ENCODE measurements at regions of chr6 and their contacts with region 1.

Region 1: GRCh38 chr6:45714741-45715507 is 300.7 kb downstream of the CLIC5 start:
- DNase-seq: peak; percentile 50
- ATAC-seq: peak; percentile 97
- H3K4me3 Mint-ChIP-seq: no peak overlapping the region
- H3K27ac Mint-ChIP-seq: no peak overlapping the region
- H3K4me1 Mint-ChIP-seq: peaks cover 6% of the 10 kb centered on the region
- H3K27me3 Mint-ChIP-seq: no peaks in the 10 kb centered on the region
- CTCF ChIP-seq: 0 out of 2 replicates have a peak, but pooled peaks have one; percentile 29

Region 2: DNA sequence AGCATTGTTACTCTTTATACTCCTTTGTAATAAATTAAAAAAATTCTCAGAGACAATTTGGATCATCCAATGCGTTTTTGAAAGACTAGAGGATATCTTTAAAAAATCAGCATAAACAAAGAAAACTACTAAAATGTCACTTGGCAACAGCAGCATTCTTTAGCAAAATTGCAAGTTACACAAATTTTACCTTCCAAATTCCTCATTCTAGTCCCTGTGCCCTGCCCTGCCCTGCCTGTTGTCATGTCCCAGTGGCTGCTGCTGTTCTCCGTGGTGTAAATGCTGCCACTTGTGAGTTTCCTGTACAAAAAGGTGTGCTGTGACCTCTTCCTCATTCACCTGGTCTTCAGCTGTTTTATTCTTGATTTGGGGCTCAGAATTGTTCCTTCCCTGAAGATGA is 1244.2 kb before region 1 on chr6:
- CTCF ChIA-PET with region 1: interaction called, 22 read pairs
- POLR2A ChIA-PET with region 1: interaction called, 3 read pairs
- DNase-seq: no peak
- ATAC-seq: no peak
- H3K4me3 Mint-ChIP-seq: no peak overlapping the region
- H3K27ac Mint-ChIP-seq: no peak overlapping the region
- H3K4me1 Mint-ChIP-seq: peaks cover 36% of the 10 kb centered on the region
- H3K27me3 Mint-ChIP-seq: peaks cover 2% of the 10 kb centered on the region; the same call in 1 of the 2 replicates
- CTCF ChIP-seq: no peak

Region 3: GRCh38 chr6:44655412-44656342 is 1059.2 kb before region 1 on chr6:
- CTCF ChIA-PET with region 1: interaction called, 16 read pairs
- POLR2A ChIA-PET with region 1: no interaction called
- DNase-seq: peak; percentile 91
- ATAC-seq: peak; percentile 88
- H3K4me3 Mint-ChIP-seq: no peak overlapping the region
- H3K27ac Mint-ChIP-seq: peak overlapping the region; percentile 40
- H3K4me1 Mint-ChIP-seq: peaks cover 33% of the 10 kb centered on the region
- H3K27me3 Mint-ChIP-seq: no peaks in the 10 kb centered on the region; the same call in 1 of the 2 replicates
- CTCF ChIP-seq: peak; percentile 93

Region 4: GRCh38 chr6:45423111-45423823 is 291.7 kb before region 1 on chr6:
- CTCF ChIA-PET with region 1: interaction called, 13 read pairs
- POLR2A ChIA-PET with region 1: no interaction called
- DNase-seq: peak; percentile 53
- ATAC-seq: peak; percentile 51
- H3K4me3 Mint-ChIP-seq: peak overlapping the region; percentile 87
- H3K27ac Mint-ChIP-seq: no peak overlapping the region
- H3K4me1 Mint-ChIP-seq: peaks cover 33% of the 10 kb centered on the region
- H3K27me3 Mint-ChIP-seq: peaks cover 85% of the 10 kb centered on the region
- CTCF ChIP-seq: no peak

Region 5: DNA sequence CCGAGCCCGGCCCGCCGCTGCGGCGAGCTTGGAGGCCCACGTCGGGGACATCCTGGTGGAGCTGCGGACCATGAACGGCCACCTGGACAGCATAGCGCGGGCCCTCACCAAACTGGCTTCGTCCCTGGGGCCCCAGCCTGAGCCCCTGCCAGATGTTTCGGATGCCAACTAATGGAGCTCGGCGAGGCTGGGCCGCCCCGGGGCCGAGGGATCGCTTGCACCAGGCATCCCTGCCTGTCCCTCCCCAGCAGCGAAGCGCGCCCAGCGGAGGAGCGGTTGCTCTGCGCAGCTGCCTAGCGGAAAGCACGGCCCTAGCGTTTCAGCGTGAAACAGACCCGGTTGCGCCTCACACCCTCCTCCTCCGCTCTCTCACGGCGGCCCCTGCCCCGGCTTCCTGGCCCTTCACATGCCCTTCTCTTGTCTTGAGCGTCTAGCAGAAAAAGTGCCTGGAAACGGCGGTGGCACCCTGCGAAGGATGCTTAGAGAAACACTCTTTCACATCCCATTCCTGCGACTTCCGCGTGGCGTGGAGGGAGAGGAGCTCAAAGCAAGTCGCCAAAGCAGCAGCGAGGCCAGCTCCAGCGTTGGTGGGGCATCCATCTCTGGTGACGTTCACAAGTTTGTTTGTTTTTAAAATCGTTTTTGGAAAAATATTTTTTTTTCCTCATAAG is 51.2 kb before region 1 on chr6:
- CTCF ChIA-PET with region 1: interaction called, 11 read pairs
- POLR2A ChIA-PET with region 1: no interaction called
- DNase-seq: peak; percentile 76
- ATAC-seq: peak; percentile 87
- H3K4me3 Mint-ChIP-seq: peak overlapping the region; percentile 58
- H3K27ac Mint-ChIP-seq: no peak overlapping the region
- H3K4me1 Mint-ChIP-seq: peaks cover 28% of the 10 kb centered on the region
- H3K27me3 Mint-ChIP-seq: peaks cover 59% of the 10 kb centered on the region
- CTCF ChIP-seq: no peak

Region 6: GRCh38 chr6:45741437-45742171 is 26.7 kb after region 1 on chr6:
- CTCF ChIA-PET with region 1: no interaction called
- POLR2A ChIA-PET with region 1: no interaction called
- DNase-seq: no peak
- ATAC-seq: no peak
- H3K4me3 Mint-ChIP-seq: no peak overlapping the region
- H3K27ac Mint-ChIP-seq: no peak overlapping the region; the same call in 1 of the 2 replicates
- H3K4me1 Mint-ChIP-seq: peaks cover 8% of the 10 kb centered on the region
- H3K27me3 Mint-ChIP-seq: no peaks in the 10 kb centered on the region
- CTCF ChIP-seq: no peak

Region 7: GRCh38 chr6:45922728-45923351 is 207.9 kb after region 1 on chr6:
- CTCF ChIA-PET with region 1: interaction called, 36 read pairs
- POLR2A ChIA-PET with region 1: no interaction called
- DNase-seq: peak; percentile 75
- ATAC-seq: peak; percentile 83
- H3K4me3 Mint-ChIP-seq: no peak overlapping the region
- H3K27ac Mint-ChIP-seq: no peak overlapping the region
- H3K4me1 Mint-ChIP-seq: peaks cover 34% of the 10 kb centered on the region
- H3K27me3 Mint-ChIP-seq: peaks cover 11% of the 10 kb centered on the region; the same call in 1 of the 2 replicates
- CTCF ChIP-seq: peak; percentile 50